ENCODE measurements at regions of chr17 and their contacts with region 1.

Region 1: GRCh38 chr17:64420143-64420971 is 28.6 kb upstream of the MILR1 start:
- DNase-seq: peak; percentile 38
- H3K4me3 Mint-ChIP-seq: no peak overlapping the region
- H3K27ac Mint-ChIP-seq: no peak overlapping the region
- H3K4me1 Mint-ChIP-seq: peaks cover 3% of the 10 kb centered on the region
- H3K27me3 Mint-ChIP-seq: peaks cover 29% of the 10 kb centered on the region

Region 2: DNA sequence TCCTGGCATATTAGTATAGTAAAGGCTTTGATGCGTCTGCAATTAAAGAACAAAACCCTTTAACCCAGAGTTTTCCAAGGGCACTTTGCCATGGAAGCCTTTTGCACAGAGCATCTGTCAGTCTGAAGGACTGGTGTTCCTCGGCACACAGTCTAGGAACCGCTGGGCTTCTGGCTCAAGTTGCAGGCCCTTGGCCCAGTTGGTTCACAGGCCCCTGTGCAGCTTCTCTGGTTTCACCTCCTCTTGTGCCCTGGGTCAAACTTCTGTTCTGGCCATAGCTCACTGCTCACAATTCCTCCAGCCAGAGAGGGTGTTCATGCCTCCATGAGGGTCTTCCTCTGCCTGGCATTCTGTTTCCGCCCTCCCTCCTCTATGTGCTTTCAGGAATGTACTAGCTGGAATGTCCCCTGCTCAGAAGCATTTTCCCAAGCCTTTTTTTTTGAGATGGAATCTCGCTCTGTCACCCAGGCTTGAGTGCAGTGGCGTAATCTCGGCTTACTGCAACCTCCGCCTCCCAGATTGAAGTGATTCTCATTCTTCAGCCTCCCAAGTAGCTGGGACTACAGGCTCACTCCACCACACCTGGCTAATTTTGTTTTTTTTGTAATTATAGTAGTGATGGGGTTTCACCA is 122.8 kb before region 1 on chr17:
- CTCF ChIA-PET with region 1: interaction called, 21 read pairs
- DNase-seq: no peak
- H3K4me3 Mint-ChIP-seq: no peak overlapping the region
- H3K27ac Mint-ChIP-seq: no peak overlapping the region
- H3K4me1 Mint-ChIP-seq: no peaks in the 10 kb centered on the region
- H3K27me3 Mint-ChIP-seq: peaks cover 36% of the 10 kb centered on the region

Region 3: GRCh38 chr17:64320613-64321553 is 99.5 kb before region 1 on chr17:
- CTCF ChIA-PET with region 1: interaction called, 126 read pairs
- DNase-seq: peak; percentile 69
- H3K4me3 Mint-ChIP-seq: no peak overlapping the region
- H3K27ac Mint-ChIP-seq: no peak overlapping the region
- H3K4me1 Mint-ChIP-seq: peaks cover 5% of the 10 kb centered on the region
- H3K27me3 Mint-ChIP-seq: peaks cover 34% of the 10 kb centered on the region

Region 4: DNA sequence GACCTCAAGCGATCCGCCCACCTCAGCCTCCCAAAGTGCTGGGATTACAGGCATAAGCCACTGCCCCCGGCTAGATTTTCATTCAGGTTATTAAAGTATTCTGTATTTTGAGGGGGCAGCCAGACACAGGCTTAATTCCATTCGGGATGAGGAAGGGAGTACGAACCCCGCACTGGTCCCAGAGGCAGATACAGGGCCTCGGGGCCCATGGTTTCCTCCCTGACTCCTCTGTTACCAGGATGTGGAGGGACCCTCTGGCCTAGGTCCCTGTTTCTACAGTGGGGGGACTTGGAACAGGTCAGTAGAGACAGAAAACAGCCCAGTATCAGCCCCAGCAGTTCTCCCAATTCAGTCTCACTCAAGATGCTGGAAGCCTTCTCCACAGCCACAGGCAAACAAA is 71.7 kb before region 1 on chr17:
- CTCF ChIA-PET with region 1: interaction called, 13 read pairs
- DNase-seq: no peak
- H3K4me3 Mint-ChIP-seq: no peak overlapping the region
- H3K27ac Mint-ChIP-seq: peak overlapping the region; percentile 95
- H3K4me1 Mint-ChIP-seq: peaks cover 34% of the 10 kb centered on the region
- H3K27me3 Mint-ChIP-seq: peaks cover 6% of the 10 kb centered on the region

Region 5: GRCh38 chr17:64455993-64456885 is 35.9 kb after region 1 on chr17:
- CTCF ChIA-PET with region 1: interaction called, 17 read pairs
- DNase-seq: no peak
- H3K4me3 Mint-ChIP-seq: no peak overlapping the region
- H3K27ac Mint-ChIP-seq: peak overlapping the region; percentile 90
- H3K4me1 Mint-ChIP-seq: peaks cover 28% of the 10 kb centered on the region
- H3K27me3 Mint-ChIP-seq: peaks cover 4% of the 10 kb centered on the region

Region 6: DNA sequence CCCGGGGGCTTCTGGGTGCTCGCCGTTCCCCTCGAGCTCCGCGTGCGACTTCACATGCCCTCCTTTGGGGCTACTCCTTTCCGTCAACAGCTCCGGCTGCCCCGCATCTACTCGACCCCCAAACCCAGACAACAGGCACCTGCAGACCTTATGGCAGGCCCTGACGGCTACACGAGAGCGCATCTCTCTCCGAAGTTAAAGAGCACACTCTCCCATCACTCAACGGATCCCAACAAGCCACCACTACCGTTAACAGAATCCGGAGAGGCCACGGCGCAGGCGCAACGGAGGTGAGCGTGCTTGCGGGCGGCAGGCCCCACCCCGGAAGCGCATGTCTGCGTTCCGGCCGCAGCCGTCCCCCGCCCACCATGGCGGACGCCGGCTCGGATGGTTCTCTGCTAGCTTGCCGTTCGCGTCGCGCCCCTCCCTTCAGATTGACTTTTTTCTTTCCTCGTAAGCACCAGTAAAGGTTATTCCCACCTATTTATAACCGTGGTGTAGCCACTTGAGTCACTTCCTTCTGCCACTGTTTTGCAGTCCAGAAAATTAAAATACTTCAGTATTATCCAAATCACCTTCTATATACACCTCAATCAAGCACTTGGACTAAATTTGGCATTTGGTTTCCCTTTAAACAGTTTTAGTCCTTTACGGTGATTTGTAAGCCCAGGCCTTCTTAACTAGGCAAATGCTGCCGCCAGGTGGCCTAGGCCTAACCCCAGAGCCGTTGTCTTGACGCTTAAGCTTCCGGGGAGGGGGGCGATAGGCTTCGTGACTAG is 76.6 kb after region 1 on chr17 and contains the start of gene POLG2:
- CTCF ChIA-PET with region 1: interaction called, 264 read pairs
- DNase-seq: peak; percentile 96
- H3K4me3 Mint-ChIP-seq: peak within 1 kb of the TSS; percentile 98
- H3K27ac Mint-ChIP-seq: peak within 1 kb of the TSS; percentile 96
- H3K4me1 Mint-ChIP-seq: peaks cover 87% of the 10 kb centered on the region
- H3K27me3 Mint-ChIP-seq: no peaks in the 10 kb centered on the region

Region 7: DNA sequence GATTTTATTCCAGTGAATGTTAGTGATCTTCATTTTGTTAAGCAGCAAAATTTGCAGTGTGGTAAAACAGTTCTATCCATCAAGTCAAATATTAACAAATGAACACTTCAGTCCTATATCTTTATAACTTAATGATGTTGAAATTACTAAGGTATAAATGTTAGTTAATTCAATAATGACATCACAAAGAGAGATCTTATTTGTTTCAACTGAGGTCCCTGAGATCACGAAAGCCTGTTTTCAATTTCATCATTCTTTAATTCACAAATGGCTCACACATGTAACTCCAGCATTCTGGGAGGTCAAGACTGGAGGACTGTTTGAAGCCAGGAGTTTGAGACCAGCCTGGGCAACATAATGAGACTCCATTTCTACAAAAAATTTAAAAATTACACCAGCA is 227.9 kb after region 1 on chr17:
- CTCF ChIA-PET with region 1: interaction called, 27 read pairs
- DNase-seq: no peak
- H3K4me3 Mint-ChIP-seq: no peak overlapping the region
- H3K27ac Mint-ChIP-seq: no peak overlapping the region
- H3K4me1 Mint-ChIP-seq: peaks cover 14% of the 10 kb centered on the region
- H3K27me3 Mint-ChIP-seq: no peaks in the 10 kb centered on the region